Posterior vena cava (tissue), 2 donors: ENCODE measurements at regions of chr2 and their contacts with region 1.

Region 1: GRCh38 chr2:207166039-207166348 is 246 bp upstream of the KLF7 start:
- DNase-seq: peak; percentile 100

Region 2: DNA sequence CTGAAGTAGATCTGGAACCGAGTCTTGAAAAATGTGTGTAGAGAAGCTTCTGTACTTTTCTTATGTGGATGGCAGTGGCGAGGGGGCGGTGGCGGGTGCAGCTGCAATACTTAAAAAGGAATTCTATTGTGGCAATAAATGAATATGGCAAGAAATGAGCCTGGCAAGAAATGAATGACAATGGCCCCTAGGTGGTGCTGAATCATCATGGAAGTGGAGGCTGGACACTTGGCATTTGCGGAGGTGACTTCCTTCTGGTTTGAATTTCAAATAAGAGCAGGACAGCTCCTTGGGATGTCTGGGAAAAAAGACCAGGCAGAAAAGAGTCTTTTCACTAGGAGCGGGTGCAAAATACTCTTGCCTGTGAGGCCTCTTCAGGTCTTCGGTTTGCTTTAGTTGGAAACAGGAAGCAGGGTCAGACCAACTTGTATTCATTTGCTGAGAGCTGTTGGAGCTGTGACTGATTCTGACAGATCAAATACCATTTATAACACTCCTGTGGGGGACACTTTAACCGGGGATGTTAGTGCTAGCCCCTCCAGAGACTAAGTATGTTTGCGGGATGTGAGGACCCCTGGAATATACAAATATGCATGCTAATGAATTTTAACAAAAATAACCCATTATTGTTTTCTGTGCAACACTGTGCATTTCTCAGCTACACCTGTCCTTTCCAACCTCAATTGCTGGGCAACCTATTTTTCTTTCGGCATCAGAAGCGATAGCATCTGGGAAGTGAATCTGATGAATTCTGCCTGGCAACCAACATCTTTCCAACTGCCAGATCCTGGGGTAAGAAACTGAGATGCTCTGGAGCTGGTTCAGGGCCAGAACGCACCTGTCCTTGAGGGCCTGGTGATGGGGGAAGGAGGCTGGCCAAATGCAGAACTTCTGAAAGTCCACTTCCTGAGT is 365.2 kb before region 1 on chr2:
- intact Hi-C with region 1: loop called in 1 of 2 experiments (anchors 10 kb)
- DNase-seq: peak; percentile 84

Region 3: GRCh38 chr2:207258263-207258991 is 92.4 kb after region 1 on chr2:
- intact Hi-C with region 1: loop called in 1 of 2 experiments (anchors 10 kb)
- DNase-seq: peak; percentile 89

Region 4: GRCh38 chr2:207334624-207335371 is 168.8 kb after region 1 on chr2:
- intact Hi-C with region 1: loop called in 1 of 2 experiments (anchors 10 kb)
- DNase-seq: peak; percentile 93